Right cardiac atrium (tissue), 5 donors: ENCODE measurements at regions of chr3 and their contacts with region 1.

Region 1: DNA sequence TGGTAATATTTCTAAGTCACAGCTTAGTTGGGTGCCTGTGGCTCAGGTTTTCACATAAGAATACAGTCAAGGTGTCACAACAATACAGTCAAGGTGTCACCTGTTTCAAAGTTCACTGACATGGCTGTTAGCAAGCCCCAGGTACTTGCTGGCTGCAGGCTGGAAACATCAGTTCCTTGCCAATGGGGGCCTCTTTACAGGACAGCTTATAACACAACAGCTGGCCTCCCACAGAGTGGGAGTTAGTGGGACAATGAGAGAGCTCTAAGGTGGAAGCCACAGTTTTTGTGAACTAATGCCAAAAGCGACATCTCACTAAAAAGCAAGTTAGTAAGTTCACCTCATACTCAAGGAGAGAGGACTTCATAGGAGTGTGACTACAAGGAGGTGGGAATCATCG is 45.4 kb downstream of the GPR156 start:
- DNase-seq: no peak
- ATAC-seq: no peak
- H3K4me3 ChIP-seq: no peak overlapping the region
- H3K27ac ChIP-seq: no peak overlapping the region
- H3K4me1 ChIP-seq: no peaks in the 10 kb centered on the region
- H3K27me3 ChIP-seq: no peaks in the 10 kb centered on the region

Region 2: DNA sequence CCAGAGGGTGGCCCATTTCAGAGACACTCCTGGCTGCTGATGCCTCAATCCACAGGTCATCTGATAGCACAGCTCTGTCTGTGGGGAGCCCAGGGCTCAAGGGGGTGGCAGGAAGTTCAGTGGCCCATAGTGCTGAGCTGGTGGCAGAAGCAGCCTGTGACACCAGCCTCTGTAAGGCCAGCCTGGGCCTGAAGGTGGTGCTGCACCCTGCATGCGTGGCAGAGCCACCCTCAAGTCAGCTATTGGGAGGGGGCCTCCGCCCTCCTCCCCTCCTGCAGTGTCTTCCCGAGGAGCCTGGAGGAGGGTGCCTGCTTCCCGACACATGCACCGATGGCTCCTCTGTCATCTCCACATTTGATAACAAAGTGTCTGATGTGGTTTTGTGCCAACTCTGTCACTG is 638.9 kb before region 1 on chr3:
- intact Hi-C with region 1: no loop called
- DNase-seq: peak; percentile 33 to 82 (median 78)
- ATAC-seq: peak; percentile 77 to 78
- H3K4me3 ChIP-seq: no peak overlapping the region
- H3K27ac ChIP-seq: peak overlapping the region; percentile 23
- H3K4me1 ChIP-seq: peaks cover 21% of the 10 kb centered on the region
- H3K27me3 ChIP-seq: no peaks in the 10 kb centered on the region

Region 3: DNA sequence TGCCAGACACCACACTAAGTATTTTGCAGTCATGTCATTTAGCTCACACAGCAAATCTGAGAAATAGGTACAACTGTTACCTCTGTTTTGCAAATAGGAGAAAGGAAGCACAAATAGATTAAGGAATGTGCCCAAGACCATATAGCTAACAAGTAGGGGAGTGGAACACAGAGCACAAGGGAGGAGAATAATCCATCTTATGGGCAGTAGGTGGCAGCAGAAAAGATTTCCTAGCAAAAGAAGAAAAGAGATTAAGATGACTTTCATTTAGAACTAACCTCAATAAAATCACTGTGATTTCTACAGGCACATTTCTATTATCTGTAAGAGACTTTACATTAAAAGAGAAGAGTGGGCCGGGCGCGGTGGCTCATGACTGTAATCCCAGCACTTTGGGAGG is 408.6 kb before region 1 on chr3:
- intact Hi-C with region 1: no loop called
- DNase-seq: no peak
- ATAC-seq: no peak
- H3K4me3 ChIP-seq: no peak overlapping the region
- H3K27ac ChIP-seq: no peak overlapping the region
- H3K4me1 ChIP-seq: peaks cover 3% of the 10 kb centered on the region
- H3K27me3 ChIP-seq: no peaks in the 10 kb centered on the region

Region 4: DNA sequence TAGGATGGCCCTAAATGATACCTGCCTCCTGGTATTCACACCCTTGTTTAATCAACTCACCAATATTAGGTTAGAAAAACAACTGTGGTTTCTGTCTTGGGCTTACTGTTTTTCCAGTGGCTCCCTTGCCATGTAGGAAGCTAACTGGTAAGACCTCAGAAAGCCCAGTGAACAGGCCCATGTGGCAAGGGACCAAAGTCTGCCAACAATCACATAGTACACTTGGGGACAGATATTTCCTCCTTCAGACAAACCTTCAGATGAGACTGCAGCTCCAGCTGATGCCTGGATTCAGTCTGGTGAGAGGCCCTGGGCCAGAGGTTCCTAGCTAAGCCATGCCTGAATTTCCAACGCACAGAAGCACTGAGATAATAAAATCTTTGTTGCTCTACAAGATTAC is 241.5 kb before region 1 on chr3:
- intact Hi-C with region 1: no loop called
- DNase-seq: no peak
- ATAC-seq: no peak
- H3K4me3 ChIP-seq: no peak overlapping the region
- H3K27ac ChIP-seq: no peak overlapping the region
- H3K4me1 ChIP-seq: no peaks in the 10 kb centered on the region
- H3K27me3 ChIP-seq: no peaks in the 10 kb centered on the region

Region 5: GRCh38 chr3:120284747-120285507 is 45.3 kb after region 1 on chr3 and contains the start of gene GPR156:
- intact Hi-C with region 1: no loop called
- DNase-seq: peak; percentile 30 to 69 (median 67)
- ATAC-seq: peak; percentile 79 to 82
- H3K4me3 ChIP-seq: peak within 1 kb of the TSS; percentile 68
- H3K27ac ChIP-seq: no peak within 1 kb of the TSS
- H3K4me1 ChIP-seq: no peaks in the 10 kb centered on the region
- H3K27me3 ChIP-seq: no peaks in the 10 kb centered on the region
- total RNA-seq, gene GPR156: 0.08 to 0.31 (median 0.15) TPM

Region 6: GRCh38 chr3:120795017-120795648 is 555.5 kb after region 1 on chr3:
- intact Hi-C with region 1: loop called in 1 of 4 experiments (anchors 5 kb)
- DNase-seq: peak; percentile 74 to 92 (median 85)
- ATAC-seq: peak; percentile 81 to 89
- H3K4me3 ChIP-seq: no peak overlapping the region
- H3K27ac ChIP-seq: no peak overlapping the region
- H3K4me1 ChIP-seq: no peaks in the 10 kb centered on the region
- H3K27me3 ChIP-seq: no peaks in the 10 kb centered on the region